BJ (cell line): ENCODE measurements at regions of chr11 and their contacts with region 1.

Region 1: GRCh38 chr11:114243461-114244372 is 52.5 kb upstream of the NNMT start:
- DNase-seq: no peak
- H3K4me3 ChIP-seq: no peak overlapping the region
- H3K27me3 ChIP-seq: peaks cover 3% of the 10 kb centered on the region
- CTCF ChIP-seq: no peak

Region 2: GRCh38 chr11:113923572-113923971 is 320.1 kb before region 1 on chr11:
- CTCF ChIA-PET with region 1: no interaction called
- POLR2A ChIA-PET with region 1: interaction called, 12 read pairs
- DNase-seq: no peak
- H3K4me3 ChIP-seq: no peak overlapping the region
- H3K27me3 ChIP-seq: no peaks in the 10 kb centered on the region
- CTCF ChIP-seq: no peak

Region 3: GRCh38 chr11:114280696-114281095 is 37.0 kb after region 1 on chr11:
- CTCF ChIA-PET with region 1: no interaction called
- POLR2A ChIA-PET with region 1: no interaction called
- DNase-seq: peak; percentile 26
- H3K4me3 ChIP-seq: no peak overlapping the region
- H3K27me3 ChIP-seq: peaks cover 6% of the 10 kb centered on the region
- CTCF ChIP-seq: peak; percentile 85